ENCODE measurements at regions of chr16 and their contacts with region 1.

Region 1: DNA sequence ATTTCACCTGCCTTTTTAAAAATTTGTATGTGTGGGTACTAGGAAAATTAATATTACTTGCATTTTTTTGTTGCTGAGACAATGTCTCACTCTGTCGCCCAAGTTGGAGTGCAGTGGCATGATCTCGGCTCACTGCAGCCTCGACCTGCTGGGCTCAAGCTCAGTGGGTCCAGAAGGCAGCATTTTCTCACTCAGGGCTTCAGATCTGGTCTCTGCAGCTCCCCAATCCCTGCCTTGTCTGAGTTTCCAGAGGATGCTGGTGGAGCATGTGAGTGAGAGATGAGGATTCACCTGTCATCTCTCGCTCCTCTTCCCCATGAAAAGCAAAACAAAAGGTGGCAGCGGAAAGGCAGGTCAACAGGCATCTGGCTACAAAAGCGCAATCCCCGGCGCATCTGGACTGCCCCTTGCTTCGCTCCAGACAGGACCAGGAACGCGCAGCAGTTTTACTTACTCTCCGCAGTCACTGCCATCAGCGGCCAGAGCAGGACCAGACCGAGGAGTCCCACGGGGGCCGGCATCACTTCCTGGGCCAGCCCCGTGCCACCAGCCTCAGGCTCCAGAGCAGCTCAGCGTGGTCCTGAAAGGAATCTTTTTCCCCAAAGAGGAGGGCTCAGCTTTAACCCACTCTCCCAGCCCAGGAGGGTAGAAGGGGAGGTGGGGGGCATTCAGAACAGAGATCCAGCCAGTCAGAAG is 59.9 kb downstream of the LITAF start:
- DNase-seq: no peak
- ATAC-seq: no peak
- H3K4me3 Mint-ChIP-seq: no peak overlapping the region
- H3K27ac Mint-ChIP-seq: no peak overlapping the region
- H3K4me1 Mint-ChIP-seq: no peaks in the 10 kb centered on the region
- H3K27me3 Mint-ChIP-seq: no peaks in the 10 kb centered on the region
- CTCF ChIP-seq: no peak

Region 2: DNA sequence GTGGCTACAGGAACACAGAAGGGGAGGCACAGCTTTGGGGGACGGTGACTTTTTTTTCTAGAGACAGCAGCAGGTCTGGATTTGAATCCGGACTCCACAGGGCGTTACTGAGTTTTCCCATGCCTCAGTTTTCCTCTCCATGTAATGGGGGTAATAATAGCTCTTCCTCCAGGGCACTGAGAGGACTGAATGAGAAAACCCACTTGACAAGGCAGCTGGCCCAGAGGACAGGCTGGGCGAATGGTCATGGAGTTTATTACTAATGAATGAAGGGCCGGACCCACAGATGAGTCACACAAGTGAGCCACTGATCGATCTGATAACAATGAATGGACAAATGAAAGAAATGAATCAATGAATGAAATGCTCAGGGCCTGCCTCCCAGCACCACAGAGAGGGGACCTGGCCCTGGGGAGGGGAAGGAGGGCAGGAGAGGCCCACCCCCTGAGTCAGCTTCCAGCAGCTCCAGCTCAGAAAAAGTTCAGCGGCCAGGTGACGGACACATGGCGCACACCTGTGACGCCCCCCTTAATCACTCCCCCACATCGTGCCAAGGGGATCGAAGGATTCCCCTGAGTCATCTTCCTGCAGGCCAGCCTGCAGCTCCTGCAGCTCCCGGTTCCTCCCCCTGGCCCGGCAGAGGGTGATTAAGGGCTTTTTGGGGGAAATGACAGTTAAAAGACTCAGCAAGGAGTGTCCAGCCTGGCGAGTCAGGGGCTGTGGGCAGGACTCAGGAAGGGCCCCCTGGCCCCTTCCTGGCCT is 325.1 kb before region 1 on chr16:
- CTCF ChIA-PET with region 1: no interaction called
- POLR2A ChIA-PET with region 1: no interaction called
- intact Hi-C with region 1: no loop called
- DNase-seq: no peak
- ATAC-seq: no peak
- H3K4me3 Mint-ChIP-seq: no peak overlapping the region
- H3K27ac Mint-ChIP-seq: no peak overlapping the region
- H3K4me1 Mint-ChIP-seq: peaks cover 42% of the 10 kb centered on the region
- H3K27me3 Mint-ChIP-seq: peaks cover 1% of the 10 kb centered on the region
- CTCF ChIP-seq: no peak

Region 3: GRCh38 chr16:11597239-11598101 is 70.7 kb after region 1 on chr16:
- CTCF ChIA-PET with region 1: interaction called, 19 read pairs
- POLR2A ChIA-PET with region 1: no interaction called
- intact Hi-C with region 1: no loop called
- DNase-seq: peak; percentile 27
- ATAC-seq: peak; percentile 81
- H3K4me3 Mint-ChIP-seq: no peak overlapping the region
- H3K27ac Mint-ChIP-seq: peak overlapping the region; percentile 51
- H3K4me1 Mint-ChIP-seq: peaks cover 22% of the 10 kb centered on the region
- H3K27me3 Mint-ChIP-seq: no peaks in the 10 kb centered on the region
- CTCF ChIP-seq: no peak

Region 4: GRCh38 chr16:11639925-11640899 is 113.4 kb after region 1 on chr16:
- CTCF ChIA-PET with region 1: interaction called, 82 read pairs
- POLR2A ChIA-PET with region 1: no interaction called
- intact Hi-C with region 1: loop called (anchors 5 kb)
- DNase-seq: no peak
- ATAC-seq: peak; percentile 21
- H3K4me3 Mint-ChIP-seq: no peak overlapping the region
- H3K27ac Mint-ChIP-seq: no peak overlapping the region
- H3K4me1 Mint-ChIP-seq: peaks cover 10% of the 10 kb centered on the region
- H3K27me3 Mint-ChIP-seq: no peaks in the 10 kb centered on the region
- CTCF ChIP-seq: no peak

Measured in activated CD8-positive, alpha-beta T cell treated with anti-CD3 and anti-CD28 coated beads for 36 hours (primary cell).